ENCODE measurements at regions of chr1 and their contacts with region 1.

Region 1: GRCh38 chr1:20281801-20282200 is 8.9 kb upstream of the VWA5B1 start:
- DNase-seq: no peak
- ATAC-seq: no peak
- H3K4me3 ChIP-seq: no peak overlapping the region
- H3K27ac ChIP-seq: peak overlapping the region in 2 of 4 donors; percentile 19 to 76
- H3K4me1 ChIP-seq: peaks cover 11 to 16% of the 10 kb centered on the region in 2 donors
- H3K27me3 ChIP-seq: no peaks in the 10 kb centered on the region
- CTCF ChIP-seq: no peak
- POLR2A ChIP-seq: no peak

Region 2: DNA sequence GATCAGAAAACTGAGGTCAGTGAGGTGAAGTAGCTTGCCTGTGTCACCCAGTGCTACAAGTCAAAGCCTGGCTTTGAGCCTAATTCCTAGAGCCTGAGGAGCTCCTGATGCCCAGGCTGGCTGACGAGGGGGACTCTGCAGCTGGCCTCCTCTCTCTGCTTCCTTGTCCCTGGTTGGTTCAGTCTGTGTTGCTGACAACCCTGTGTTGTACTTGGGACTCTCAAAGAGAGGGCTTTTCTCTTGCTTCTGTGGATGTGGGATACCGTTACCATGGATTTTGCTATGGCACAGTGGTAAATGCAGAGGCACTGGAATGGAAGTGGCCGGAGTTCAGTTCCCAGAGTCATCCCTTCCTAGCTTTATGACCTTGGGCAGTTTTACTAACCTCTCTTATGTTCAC is 16.8 kb after region 1 on chr1:
- in situ Hi-C with region 1: no loop called
- intact Hi-C with region 1: loop called (anchors 2 kb)
- DNase-seq: no peak
- ATAC-seq: no peak
- H3K4me3 ChIP-seq: no peak overlapping the region
- H3K27ac ChIP-seq: no peak overlapping the region
- H3K4me1 ChIP-seq: peaks cover 0 to 18% of the 10 kb centered on the region in 2 donors
- H3K27me3 ChIP-seq: peaks cover 0 to 1% (median 0%) of the 10 kb centered on the region in 3 donors
- CTCF ChIP-seq: no peak
- POLR2A ChIP-seq: no peak

Region 3: GRCh38 chr1:20361806-20362640 is 80.2 kb after region 1 on chr1:
- in situ Hi-C with region 1: no loop called
- intact Hi-C with region 1: loop called (anchors 1 kb)
- DNase-seq: peak in 1 of 2 donors; percentile 48
- ATAC-seq: peak in 1 of 2 donors; percentile 44
- H3K4me3 ChIP-seq: no peak overlapping the region
- H3K27ac ChIP-seq: no peak overlapping the region
- H3K4me1 ChIP-seq: peaks cover 26 to 37% of the 10 kb centered on the region in 2 donors
- H3K27me3 ChIP-seq: peaks cover 16 to 25% (median 19%) of the 10 kb centered on the region in 3 donors
- CTCF ChIP-seq: peak; percentile 54 to 81 (median 79)
- POLR2A ChIP-seq: no peak

Measured in gastrocnemius medialis (tissue), 4 donors.